A673 (cell line): ENCODE measurements at regions of chr6 and their contacts with region 1.

Region 1: DNA sequence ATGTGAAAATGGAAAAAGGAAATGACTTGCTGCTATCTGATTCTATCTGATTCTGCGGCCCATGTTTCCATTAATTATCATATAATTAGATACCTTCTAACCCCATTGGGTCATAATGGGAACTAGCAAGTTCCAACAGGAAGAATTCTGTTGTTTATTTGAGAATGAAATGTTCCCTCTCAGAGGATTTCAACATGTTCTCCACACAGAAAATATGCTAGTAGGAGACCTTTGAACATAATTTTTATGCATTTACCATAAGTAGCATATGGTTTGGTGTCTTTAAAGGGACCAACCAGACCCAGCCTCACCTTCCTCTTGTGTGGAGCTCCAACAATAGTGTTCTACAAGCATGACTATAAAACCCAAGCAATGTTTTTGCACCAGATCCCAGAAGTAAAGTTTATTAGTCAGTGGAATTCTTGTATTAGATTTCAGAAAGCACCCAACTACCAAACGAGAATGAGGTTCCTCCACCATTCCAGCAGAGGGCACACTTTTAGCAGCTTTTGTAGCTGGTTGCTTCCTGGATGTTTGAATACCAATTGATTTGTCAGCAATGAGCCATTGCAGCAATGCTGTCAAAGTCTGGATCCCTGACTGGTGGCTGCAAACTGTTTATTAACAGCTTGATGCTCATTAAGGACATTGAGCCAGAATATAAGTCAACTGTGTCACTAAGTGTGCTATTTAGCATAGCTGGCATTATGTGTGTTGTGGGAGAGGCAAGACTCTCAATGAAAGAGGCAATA is 143.6 kb upstream of the GJE1 start:
- DNase-seq: peak; percentile 81
- H3K4me3 ChIP-seq: no peak overlapping the region
- H3K27ac ChIP-seq: no peak overlapping the region
- H3K4me1 ChIP-seq: no peaks in the 10 kb centered on the region
- H3K27me3 ChIP-seq: no peaks in the 10 kb centered on the region
- CTCF ChIP-seq: peak; percentile 80

Region 2: GRCh38 chr6:141641406-141641805 is 347.7 kb before region 1 on chr6:
- CTCF ChIA-PET with region 1: no interaction called
- POLR2A ChIA-PET with region 1: no interaction called
- intact Hi-C with region 1: loop called (anchors 1 kb)
- DNase-seq: no peak
- H3K4me3 ChIP-seq: no peak overlapping the region
- H3K27ac ChIP-seq: peak overlapping the region; percentile 80
- H3K4me1 ChIP-seq: peaks cover 53% of the 10 kb centered on the region
- H3K27me3 ChIP-seq: no peaks in the 10 kb centered on the region
- CTCF ChIP-seq: peak; percentile 51; the same call in 1 of the 2 replicates

Region 3: DNA sequence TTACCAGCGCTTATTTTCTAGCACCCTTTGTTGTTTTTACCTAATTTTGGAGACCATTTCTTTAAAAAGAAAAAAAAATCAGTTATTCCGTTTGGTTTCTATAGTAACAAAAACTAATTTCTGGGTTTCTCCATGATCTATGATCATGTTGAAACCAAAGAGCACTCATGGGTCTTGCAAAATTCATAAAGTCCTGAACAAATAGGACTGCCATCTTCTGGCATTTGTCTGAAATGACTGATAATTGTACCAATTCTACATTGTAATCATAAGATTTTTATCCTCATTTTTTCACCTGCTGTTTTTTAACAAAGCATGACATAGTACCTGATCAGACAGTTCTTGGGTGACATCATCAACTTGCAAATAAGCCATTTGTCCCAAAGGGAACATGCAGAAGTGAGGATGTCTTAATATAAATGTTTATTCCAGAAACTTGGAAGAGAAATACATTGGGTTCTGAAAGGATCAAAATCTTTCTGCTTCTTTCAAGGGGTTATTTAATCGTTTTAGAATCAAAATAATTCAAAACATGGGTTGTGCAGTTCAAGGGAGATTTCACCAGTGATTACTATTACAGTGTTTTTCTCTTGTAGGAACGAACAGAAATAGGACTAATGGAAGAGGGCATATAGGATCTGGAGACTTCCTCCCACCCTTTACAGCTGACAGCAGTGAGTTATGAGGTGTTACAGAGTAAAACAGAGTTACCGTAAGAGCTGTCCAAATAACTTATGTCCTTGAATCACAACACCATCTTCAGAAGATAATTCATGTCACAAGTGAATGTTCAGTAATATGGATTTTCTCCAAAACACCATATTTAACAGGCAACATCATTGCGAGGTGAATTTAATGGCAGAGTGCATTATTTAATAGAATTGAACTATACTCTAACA is 56.5 kb after region 1 on chr6:
- CTCF ChIA-PET with region 1: no interaction called
- POLR2A ChIA-PET with region 1: no interaction called
- intact Hi-C with region 1: loop called (anchors 2 kb)
- DNase-seq: peak; percentile 48
- H3K4me3 ChIP-seq: no peak overlapping the region
- H3K27ac ChIP-seq: no peak overlapping the region
- H3K4me1 ChIP-seq: no peaks in the 10 kb centered on the region
- H3K27me3 ChIP-seq: no peaks in the 10 kb centered on the region
- CTCF ChIP-seq: peak; percentile 53

Region 4: DNA sequence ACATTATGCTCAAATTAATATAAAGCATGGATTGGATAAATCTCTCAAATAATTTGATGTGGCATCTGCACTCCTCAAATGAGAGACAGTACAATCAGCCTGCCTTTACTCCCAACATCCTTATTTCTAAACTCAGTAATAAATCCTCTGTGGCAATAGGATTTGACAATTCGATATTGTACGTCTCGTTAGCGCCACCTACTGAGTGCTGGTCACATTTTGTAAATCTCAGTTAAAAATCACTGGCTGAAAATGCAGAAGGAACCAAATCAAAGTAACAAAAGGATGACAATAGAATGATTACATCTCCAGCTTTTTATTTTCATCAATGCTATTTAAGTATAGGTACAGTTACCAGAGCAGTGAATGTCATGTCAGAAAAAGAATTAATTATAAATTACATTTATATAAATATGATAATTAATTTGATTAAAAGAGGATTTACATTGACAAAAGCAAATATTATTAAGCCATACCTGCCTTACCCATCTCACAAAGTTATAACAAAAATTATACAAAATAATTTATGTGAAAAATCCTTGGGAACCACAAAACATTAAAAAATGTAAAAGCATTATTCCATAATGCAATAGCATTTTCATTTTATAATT is 123.4 kb after region 1 on chr6:
- CTCF ChIA-PET with region 1: no interaction called
- POLR2A ChIA-PET with region 1: no interaction called
- intact Hi-C with region 1: loop called (anchors 1 kb)
- DNase-seq: peak; percentile 83
- H3K4me3 ChIP-seq: no peak overlapping the region
- H3K27ac ChIP-seq: no peak overlapping the region
- H3K4me1 ChIP-seq: peaks cover 12% of the 10 kb centered on the region
- H3K27me3 ChIP-seq: no peaks in the 10 kb centered on the region
- CTCF ChIP-seq: peak; percentile 87

Region 5: GRCh38 chr6:142207265-142207877 is 218.2 kb after region 1 on chr6:
- CTCF ChIA-PET with region 1: no interaction called
- POLR2A ChIA-PET with region 1: no interaction called
- intact Hi-C with region 1: loop called (anchors 5 kb)
- DNase-seq: peak; percentile 79
- H3K4me3 ChIP-seq: no peak overlapping the region
- H3K27ac ChIP-seq: no peak overlapping the region
- H3K4me1 ChIP-seq: no peaks in the 10 kb centered on the region
- H3K27me3 ChIP-seq: no peaks in the 10 kb centered on the region
- CTCF ChIP-seq: peak; percentile 89